AG04449 (cell line): ENCODE measurements at regions of chr1 and their contacts with region 1.

Region 1: GRCh38 chr1:61043010-61043820 is 39.1 kb upstream of the NFIA start:
- DNase-seq: no peak
- H3K4me3 ChIP-seq: peak overlapping the region; percentile 52
- CTCF ChIP-seq: peak; percentile 92

Region 2: GRCh38 chr1:59971464-59971911 is 1071.7 kb before region 1 on chr1:
- CTCF ChIA-PET with region 1: interaction called, 23 read pairs
- POLR2A ChIA-PET with region 1: no interaction called
- DNase-seq: no peak
- H3K4me3 ChIP-seq: 0 out of 2 replicates have a peak overlapping the region, but pooled peaks have one; percentile 12
- CTCF ChIP-seq: peak; percentile 95

Region 3: DNA sequence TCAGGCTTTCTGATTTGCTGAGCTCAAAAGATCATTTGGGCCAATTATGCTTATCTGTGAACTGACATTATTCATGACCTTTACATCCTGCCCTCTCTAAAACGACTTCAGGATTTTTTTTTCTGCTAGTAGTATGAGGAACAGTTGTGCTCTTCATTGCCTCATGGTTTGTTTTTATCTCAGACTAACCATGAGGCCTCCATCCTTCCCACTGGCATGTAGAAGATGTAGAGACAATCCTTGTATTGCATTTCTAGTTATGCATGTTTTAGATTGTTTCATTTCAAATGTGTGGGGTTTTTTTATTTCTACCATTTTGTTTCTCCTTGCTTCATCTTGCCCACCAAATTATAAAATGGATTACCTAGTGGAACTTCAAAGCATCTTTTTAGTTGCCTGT is 886.8 kb before region 1 on chr1:
- CTCF ChIA-PET with region 1: interaction called, 14 read pairs
- POLR2A ChIA-PET with region 1: no interaction called
- DNase-seq: no peak
- H3K4me3 ChIP-seq: no peak overlapping the region
- CTCF ChIP-seq: no peak

Region 4: GRCh38 chr1:60848583-60849188 is 194.5 kb before region 1 on chr1:
- CTCF ChIA-PET with region 1: interaction called, 20 read pairs
- POLR2A ChIA-PET with region 1: no interaction called
- DNase-seq: no peak
- H3K4me3 ChIP-seq: no peak overlapping the region
- CTCF ChIP-seq: peak; percentile 1

Region 5: DNA sequence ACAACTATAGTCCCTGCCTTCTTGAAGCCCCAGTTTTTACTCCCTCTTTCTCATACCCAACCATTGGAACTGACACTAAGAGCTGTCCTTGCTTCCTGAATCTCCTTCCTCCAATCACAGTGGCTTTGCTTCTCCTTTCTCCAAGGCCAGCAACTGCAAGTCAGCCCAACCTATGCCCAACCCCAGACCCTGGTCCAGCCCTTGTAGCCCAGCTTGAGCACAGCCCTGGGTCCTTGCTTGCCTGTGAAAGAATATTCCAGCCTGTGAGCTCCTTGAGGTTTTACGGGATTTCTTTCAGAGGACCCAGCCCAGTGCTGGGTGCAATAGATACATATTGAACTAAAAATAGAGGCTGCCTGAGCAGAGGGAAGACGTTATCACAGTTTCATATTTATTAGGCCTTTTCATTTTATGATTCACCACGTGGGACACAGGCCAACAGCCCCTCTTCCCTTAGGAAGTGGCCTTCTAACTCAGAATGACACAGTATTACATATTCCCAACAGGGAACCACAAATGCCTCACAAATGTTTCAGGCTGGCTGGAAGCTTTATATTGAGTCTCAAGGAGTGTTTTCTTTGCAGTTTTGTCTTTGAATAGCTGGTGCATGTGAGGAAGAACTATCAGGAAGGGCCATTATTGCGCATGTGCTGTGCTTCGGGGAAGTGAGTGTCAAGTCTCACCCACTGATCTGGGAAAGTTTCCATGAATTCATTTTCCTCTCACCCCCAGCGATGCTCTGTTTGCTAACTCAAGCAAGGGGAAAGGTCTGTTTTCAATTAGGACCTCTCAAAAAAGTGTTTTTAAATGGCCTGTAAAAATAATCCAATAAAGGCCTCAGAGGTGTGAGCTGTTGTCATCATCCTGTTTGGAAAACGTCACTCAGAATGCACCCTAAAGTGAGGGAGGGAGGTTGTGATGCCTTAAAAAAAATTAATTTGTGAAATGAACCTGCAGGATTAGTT is 53.2 kb before region 1 on chr1:
- CTCF ChIA-PET with region 1: interaction called, 329 read pairs
- POLR2A ChIA-PET with region 1: no interaction called
- DNase-seq: peak; percentile 61
- H3K4me3 ChIP-seq: no peak overlapping the region
- CTCF ChIP-seq: no peak

Region 6: GRCh38 chr1:61056573-61057439 is 13.6 kb after region 1 on chr1:
- CTCF ChIA-PET with region 1: interaction called, 37 read pairs
- POLR2A ChIA-PET with region 1: no interaction called
- DNase-seq: no peak
- H3K4me3 ChIP-seq: peak overlapping the region; percentile 65
- CTCF ChIP-seq: no peak

Region 7: DNA sequence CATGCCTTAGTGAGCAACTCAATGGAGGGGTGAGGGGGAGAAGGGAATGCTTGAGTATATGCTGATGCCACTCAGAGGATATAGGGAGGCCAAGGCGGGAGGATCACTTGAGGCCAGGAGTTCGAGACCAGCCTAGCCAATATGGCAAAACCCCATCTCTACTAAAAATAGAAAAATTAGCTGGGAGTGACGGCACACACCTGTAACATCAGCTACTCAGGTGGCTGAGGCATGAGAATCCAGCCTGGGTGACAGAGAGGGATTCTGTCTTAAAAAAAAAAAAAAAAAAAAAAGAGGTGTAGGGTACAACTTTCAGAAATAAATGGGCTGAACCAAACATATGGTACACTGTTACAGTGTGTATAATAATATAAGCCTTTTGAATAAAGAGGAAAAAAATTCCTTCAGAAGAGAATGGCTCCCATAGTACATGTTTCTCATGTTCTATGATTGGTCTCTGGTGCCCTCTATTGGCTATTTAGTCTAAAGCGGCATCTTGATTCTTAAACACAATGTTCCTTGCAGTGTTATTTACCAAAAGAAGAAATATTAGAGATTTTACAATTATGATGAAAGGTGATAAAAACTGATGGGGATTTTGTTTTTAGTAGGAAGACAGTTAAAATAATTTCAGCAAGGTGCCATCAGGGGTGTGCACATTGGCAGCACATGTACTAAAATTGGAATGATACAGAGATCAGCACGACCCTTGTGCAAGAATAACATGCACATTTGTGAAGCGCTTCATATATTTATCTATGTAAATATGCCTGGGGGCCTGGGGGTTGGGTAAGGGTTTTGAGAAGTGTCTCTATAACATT is 808.8 kb after region 1 on chr1:
- CTCF ChIA-PET with region 1: interaction called, 41 read pairs
- POLR2A ChIA-PET with region 1: no interaction called
- DNase-seq: peak; percentile 17
- H3K4me3 ChIP-seq: no peak overlapping the region
- CTCF ChIP-seq: peak; percentile 45